A673 (cell line): ENCODE measurements at regions of chr16 and their contacts with region 1.

Region 1: GRCh38 chr16:3188925-3189825 is 1.2 kb downstream of the OR1F1 start:
- DNase-seq: peak; percentile 89
- H3K4me3 ChIP-seq: peak overlapping the region; percentile 75
- H3K27ac ChIP-seq: peak overlapping the region; percentile 24
- H3K4me1 ChIP-seq: peaks cover 16% of the 10 kb centered on the region
- H3K27me3 ChIP-seq: no peaks in the 10 kb centered on the region
- CTCF ChIP-seq: no peak

Region 2: DNA sequence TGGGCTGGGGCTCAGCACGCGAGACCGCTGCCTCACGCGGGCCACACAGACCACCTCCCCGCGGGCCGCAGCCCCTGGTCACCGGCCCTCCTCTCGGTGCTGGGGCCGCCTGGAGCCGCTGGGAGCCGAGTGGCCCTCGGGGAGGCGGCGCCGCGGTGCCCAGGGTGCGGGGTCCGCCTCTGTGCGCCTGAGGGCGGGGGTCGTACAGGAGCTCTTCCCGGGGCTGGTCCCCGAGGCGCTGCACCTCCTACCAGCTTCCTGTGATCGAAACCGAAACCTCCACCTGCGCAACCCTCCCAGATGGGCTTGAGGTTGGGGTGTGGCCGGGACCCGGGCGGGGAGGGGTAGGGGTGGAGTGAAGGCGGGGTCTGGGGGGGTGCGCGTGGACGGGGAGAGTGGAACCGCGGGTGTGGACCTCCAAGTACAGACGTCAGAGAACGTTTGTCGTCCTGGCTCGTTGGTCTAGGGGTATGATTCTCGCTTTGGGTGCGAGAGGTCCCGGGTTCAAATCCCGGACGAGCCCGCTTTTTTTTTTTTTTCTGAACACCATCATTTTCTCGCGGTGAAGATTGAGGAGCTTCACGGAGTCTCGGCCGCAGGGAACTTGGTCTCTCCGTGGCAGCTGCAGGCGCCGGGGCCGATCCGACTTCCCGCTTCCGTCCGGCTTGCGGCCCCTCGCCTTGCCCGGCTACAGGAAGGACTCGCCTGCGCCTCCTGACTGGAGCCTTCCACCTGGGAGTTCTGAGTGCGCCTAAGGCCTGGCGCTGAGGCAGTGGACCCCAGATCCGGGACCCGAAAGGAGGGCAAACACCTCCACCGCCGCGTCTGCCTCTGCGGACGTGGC is 30.5 kb before region 1 on chr16:
- CTCF ChIA-PET with region 1: no interaction called
- POLR2A ChIA-PET with region 1: no interaction called
- intact Hi-C with region 1: no loop called
- DNase-seq: peak; percentile 89
- H3K4me3 ChIP-seq: peak overlapping the region; percentile 94
- H3K27ac ChIP-seq: peak overlapping the region; percentile 65
- H3K4me1 ChIP-seq: no peaks in the 10 kb centered on the region
- H3K27me3 ChIP-seq: no peaks in the 10 kb centered on the region
- CTCF ChIP-seq: 0 out of 2 replicates have a peak, but pooled peaks have one; percentile 10

Region 3: DNA sequence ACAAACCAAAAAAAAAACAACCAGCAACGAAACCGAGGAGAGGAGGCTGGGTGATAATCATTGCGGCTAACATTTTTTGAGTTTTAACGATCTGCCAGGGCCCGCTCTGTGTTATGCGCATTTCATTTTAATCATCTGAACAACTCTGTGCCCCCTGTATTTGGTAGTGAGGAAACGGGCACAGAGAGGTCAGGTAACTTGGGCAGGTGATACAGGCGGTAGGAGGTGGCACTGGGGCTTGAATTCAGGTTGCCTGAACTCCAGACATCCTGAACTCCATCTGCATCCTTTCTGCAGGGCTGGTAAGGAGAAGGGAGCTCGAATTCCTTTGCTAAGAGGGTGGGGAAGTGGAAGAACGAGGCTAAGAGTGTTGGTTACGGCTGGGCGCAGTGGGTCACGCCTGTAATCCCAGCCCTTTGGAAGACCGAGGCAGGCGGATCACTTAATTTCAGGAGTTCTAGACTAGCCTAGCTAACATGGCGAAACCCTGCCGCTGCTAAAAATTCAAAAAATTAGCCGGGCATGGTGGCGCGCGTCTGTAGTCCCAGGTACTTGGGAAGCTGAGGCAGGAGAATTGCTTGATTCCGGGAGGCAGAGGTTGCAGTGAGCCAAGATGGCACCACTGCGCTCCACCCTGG is 312.7 kb after region 1 on chr16:
- CTCF ChIA-PET with region 1: no interaction called
- POLR2A ChIA-PET with region 1: no interaction called
- intact Hi-C with region 1: loop called (anchors 2 kb)
- DNase-seq: no peak
- H3K4me3 ChIP-seq: peak overlapping the region; percentile 96
- H3K27ac ChIP-seq: no peak overlapping the region
- H3K4me1 ChIP-seq: peaks cover 9% of the 10 kb centered on the region
- H3K27me3 ChIP-seq: no peaks in the 10 kb centered on the region
- CTCF ChIP-seq: no peak

Region 4: GRCh38 chr16:4123616-4124265 is 934.6 kb after region 1 on chr16:
- CTCF ChIA-PET with region 1: no interaction called
- POLR2A ChIA-PET with region 1: no interaction called
- intact Hi-C with region 1: no loop called
- DNase-seq: no peak
- H3K4me3 ChIP-seq: no peak overlapping the region
- H3K27ac ChIP-seq: no peak overlapping the region
- H3K4me1 ChIP-seq: no peaks in the 10 kb centered on the region
- H3K27me3 ChIP-seq: no peaks in the 10 kb centered on the region
- CTCF ChIP-seq: no peak